Cardiac septum (tissue), 1 donor: ENCODE measurements at regions of chr5 and their contacts with region 1.

Region 1: GRCh38 chr5:39376293-39376714 is 12.0 kb upstream of the C9 start:
- DNase-seq: no peak

Region 2: DNA sequence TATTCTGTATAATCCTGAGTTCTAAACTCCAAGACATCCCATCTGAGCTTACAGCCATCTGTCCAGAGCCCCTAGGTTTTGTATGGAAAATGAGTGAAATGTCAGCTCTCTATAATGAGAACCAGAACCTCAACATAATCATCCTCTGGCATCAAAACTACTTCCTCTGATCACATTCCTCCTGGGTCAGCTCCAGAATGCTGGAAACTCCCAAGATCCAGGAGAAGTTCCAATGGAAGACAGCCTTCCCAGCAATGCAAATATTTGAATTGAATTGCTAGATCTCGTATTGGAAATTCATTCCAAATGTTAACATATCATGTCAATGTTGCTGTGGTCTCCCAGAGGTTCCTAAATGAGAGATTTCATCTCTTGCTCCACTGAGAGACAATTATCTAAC is 35.8 kb before region 1 on chr5:
- intact Hi-C with region 1: no loop called
- DNase-seq: no peak

Region 3: DNA sequence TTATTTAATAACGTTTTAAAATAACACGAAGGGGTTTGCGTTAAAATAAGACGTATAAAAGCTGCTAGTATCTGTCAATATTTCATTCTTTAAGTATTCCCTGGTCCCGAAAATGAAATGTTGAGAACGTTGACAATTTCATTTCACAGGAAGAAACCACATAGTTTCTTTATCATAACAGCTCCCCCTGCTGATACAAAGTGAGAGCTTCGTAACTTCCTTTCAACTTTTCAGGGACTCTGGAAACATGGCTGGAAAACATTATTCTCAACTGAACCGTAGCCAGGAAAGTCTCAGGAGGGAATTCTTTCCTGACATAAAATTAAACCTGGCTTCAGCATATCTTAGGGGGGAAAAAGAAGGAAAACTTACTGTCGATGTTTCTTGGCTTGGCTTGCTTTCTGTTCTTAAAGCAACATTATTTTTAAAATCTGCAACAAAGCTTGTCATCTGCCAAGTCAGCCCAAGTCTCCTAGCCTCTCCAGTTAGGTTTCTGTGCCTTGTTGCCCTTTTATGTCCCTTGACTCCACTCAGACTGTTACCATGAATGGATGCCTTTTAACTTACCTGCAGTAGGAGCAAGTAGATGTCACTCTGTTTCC is 171.3 kb after region 1 on chr5:
- intact Hi-C with region 1: loop called (anchors 1 kb)
- DNase-seq: no peak

Region 4: GRCh38 chr5:39570403-39571027 is 194.2 kb after region 1 on chr5:
- intact Hi-C with region 1: loop called (anchors 2 kb)
- DNase-seq: no peak